ENCODE measurements at regions of chr15 and their contacts with region 1.

Region 1: DNA sequence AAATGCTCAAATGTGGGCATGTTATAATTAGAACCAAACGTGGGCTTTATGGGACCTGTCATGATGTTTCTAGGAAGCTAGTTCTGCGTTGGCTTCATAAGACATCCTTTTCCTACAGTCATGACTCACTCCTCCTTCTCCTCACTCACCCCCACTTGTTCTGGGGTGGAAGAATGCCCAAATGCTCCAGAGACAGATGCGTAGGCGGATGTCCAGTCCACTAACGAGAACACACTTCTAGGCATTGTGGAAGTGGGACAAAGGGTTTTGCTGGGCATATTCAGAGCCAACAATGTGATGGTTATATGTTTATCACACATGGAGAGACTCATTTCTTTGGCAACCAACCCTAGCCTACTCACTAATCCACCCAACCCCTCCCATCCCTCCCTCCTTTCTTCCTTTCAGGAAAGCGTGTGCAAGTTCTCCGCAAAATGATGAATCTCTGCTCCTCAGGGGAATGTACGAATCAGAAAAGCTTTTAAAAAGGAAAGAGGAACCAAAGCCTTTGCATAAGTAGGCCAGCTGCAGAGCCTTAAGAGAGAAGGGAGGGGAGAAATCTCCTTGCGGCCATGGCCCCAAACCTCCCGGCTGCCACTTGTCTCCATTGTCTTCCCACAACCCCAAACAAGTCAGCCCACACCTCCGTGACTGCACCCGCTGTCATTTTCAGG is 123.0 kb upstream of the SPRED1 start:
- DNase-seq: peak; percentile 31 to 85
- ATAC-seq: peak; percentile 79 to 90 (median 87)
- H3K4me3 ChIP-seq: peak overlapping the region in 6 of 10 donors; percentile 25 to 38 (median 31)
- H3K27ac ChIP-seq: peak overlapping the region; percentile 36 to 90 (median 80)
- H3K4me1 ChIP-seq: peaks cover 0 to 59% (median 30%) of the 10 kb centered on the region in 9 donors
- H3K27me3 ChIP-seq: no peaks in the 10 kb centered on the region
- CTCF ChIP-seq: no peak

Region 2: DNA sequence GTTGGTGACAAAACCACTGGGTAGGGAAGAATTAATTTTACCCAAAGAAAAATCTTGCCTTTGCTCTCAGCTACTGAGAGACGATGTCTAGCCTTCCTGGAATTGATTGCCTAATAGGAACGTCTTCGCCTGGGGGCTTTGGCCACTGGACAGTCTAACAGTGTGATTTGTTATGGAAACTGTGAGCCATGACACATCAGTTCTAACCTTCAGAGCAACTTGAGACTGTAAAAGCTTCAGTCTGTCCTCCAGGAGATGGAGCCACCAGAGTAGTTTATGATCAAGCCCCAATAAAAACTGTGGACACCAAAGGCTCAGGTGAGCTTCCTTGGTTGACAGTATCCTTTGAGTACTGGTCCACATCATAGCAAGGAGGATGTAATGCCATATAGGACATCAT is 431.0 kb before region 1 on chr15:
- intact Hi-C with region 1: no loop called
- DNase-seq: no peak
- ATAC-seq: no peak
- H3K4me3 ChIP-seq: no peak overlapping the region
- H3K27ac ChIP-seq: no peak overlapping the region
- H3K4me1 ChIP-seq: no peaks in the 10 kb centered on the region
- H3K27me3 ChIP-seq: no peaks in the 10 kb centered on the region
- CTCF ChIP-seq: no peak

Region 3: DNA sequence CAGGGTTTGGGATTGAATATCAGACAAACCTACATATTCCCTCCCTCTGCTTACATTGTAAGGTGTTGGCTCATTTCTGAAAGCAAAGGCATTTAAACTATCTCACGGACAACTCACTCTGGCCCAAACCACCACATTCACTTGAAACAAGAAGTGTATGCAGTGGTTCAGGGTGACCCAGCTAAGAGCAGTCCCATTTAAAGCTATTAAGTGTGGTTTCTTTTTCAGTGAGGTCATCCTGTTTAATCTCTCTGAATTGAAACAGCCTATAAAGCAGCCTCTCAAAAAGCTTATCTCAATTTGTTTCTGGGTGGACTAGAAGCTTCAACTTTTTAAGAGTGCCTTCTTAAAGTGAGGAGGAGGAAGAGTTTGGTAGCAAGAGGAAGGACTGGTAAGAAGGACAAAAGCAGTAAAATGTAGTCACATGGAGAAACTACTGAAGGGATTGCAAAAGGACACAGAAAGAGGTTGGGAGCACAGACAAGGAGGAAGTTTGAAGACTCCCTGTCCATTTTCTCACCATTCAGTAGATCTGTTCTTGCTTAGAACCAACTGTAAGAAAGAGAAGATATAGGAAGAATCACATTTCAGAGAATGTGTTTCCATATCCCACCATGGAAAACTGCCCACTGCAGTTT is 43.6 kb before region 1 on chr15:
- intact Hi-C with region 1: no loop called
- DNase-seq: no peak
- ATAC-seq: peak in 5 of 8 donors; percentile 18 to 51 (median 39)
- H3K4me3 ChIP-seq: no peak overlapping the region
- H3K27ac ChIP-seq: peak overlapping the region in 5 of 10 donors; percentile 4 to 70 (median 47)
- H3K4me1 ChIP-seq: peaks cover 0 to 39% (median 9%) of the 10 kb centered on the region in 9 donors
- H3K27me3 ChIP-seq: no peaks in the 10 kb centered on the region
- CTCF ChIP-seq: no peak

Region 4: DNA sequence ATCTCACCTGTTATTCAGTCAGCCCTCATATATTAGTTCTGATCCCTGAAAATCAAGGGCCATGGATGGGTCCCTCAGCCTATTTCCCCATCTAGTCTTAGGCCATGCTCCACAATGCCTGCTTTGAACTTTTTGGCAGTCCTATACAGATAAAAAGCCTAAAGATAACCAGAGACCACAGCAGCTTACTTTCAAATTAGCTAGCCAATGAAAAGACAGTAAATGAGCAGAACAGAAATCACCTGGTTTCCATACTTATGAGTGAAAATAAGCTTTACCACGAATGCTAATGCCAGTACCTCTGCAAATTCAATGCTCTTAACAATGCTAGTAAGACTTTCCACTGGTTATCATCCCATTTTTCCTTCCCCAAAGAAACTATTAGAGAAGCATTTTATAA is 18.6 kb before region 1 on chr15:
- intact Hi-C with region 1: no loop called
- DNase-seq: no peak
- ATAC-seq: no peak
- H3K4me3 ChIP-seq: no peak overlapping the region
- H3K27ac ChIP-seq: no peak overlapping the region
- H3K4me1 ChIP-seq: no peaks in the 10 kb centered on the region
- H3K27me3 ChIP-seq: no peaks in the 10 kb centered on the region
- CTCF ChIP-seq: no peak

Region 5: DNA sequence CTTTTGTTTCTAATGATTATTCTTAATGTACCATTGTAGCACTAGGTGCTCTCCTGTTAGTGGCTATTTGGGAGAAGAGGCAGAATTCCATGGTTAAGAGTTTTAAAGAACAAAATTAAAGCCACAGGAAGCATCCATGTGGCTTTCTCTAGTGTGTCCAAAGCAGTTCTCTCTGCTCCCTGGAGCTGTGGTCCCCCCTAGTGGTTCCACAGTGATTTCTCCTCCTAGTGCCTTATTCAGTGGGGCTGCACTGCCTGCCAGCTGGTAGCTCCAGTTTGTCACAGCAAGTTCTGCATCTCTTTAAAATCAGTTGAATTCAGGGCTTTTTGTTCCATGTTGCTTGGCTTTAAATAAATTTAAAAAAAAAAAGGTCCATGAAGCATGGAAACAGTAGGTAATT is 284.7 kb after region 1 on chr15:
- intact Hi-C with region 1: loop called in 1 of 10 experiments (anchors 2 kb)
- DNase-seq: peak; percentile 35 to 66
- ATAC-seq: peak in 7 of 8 donors; percentile 88 to 94 (median 93)
- H3K4me3 ChIP-seq: no peak overlapping the region
- H3K27ac ChIP-seq: no peak overlapping the region
- H3K4me1 ChIP-seq: peaks cover 0 to 10% (median 0%) of the 10 kb centered on the region in 9 donors
- H3K27me3 ChIP-seq: peaks cover 0 to 15% (median 0%) of the 10 kb centered on the region in 7 donors
- CTCF ChIP-seq: peak; percentile 45 to 75 (median 66)